Breast epithelium (tissue), 4 donors: ENCODE measurements at regions of chr10 and their contacts with region 1.

Region 1: DNA sequence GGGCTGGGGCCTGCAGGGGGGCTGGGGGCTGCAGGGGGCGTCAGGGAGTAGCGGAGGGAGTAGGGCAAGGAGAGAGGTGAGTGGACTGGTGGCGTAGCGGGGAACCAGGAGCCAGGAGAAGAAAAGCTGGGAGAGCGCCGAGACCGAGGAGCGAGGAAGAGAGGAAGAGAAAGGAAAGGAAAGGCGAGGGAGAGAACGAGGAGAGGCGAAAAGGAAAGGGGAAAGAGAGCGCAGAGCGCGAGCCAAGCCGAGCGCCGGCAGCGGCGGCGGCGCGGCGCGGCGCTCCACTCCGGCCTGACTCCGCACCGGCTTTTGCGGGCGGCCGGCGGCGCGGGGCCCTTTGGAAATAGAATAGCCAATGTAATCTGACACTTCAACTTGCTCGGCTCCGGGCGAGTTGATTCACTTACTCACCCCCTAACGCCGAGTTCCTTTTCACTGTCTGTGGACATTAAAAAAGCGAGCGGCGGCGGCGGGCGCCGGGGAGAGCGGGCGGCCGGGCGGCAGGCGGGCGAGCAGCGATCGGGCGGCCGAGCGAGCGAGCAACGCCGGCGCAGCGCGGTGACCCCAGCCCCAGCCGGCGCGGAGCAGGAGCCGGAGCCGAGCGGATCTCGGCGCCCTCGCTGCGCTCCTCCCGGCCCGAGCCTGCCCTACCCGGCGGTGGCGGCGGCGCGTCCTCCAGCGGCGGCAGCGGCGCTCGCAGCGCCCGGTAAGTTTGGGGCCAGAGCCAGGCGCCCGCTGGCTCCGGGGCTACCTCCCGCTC is at the start of gene ZMIZ1:
- DNase-seq: peak; percentile 89
- H3K4me3 ChIP-seq: peak within 1 kb of the TSS; percentile 65 to 98 (median 78)
- H3K27ac ChIP-seq: peak within 1 kb of the TSS; percentile 98 to 99
- H3K4me1 ChIP-seq: peaks cover 11 to 20% of the 10 kb centered on the region in 2 donors
- H3K27me3 ChIP-seq: no peaks in the 10 kb centered on the region
- CTCF ChIP-seq: peak in 1 of 3 donors; percentile 21
- POLR2A ChIP-seq: no peak
- total RNA-seq, gene ZMIZ1: 34.4 to 63.7 (median 39.8) TPM

Region 2: DNA sequence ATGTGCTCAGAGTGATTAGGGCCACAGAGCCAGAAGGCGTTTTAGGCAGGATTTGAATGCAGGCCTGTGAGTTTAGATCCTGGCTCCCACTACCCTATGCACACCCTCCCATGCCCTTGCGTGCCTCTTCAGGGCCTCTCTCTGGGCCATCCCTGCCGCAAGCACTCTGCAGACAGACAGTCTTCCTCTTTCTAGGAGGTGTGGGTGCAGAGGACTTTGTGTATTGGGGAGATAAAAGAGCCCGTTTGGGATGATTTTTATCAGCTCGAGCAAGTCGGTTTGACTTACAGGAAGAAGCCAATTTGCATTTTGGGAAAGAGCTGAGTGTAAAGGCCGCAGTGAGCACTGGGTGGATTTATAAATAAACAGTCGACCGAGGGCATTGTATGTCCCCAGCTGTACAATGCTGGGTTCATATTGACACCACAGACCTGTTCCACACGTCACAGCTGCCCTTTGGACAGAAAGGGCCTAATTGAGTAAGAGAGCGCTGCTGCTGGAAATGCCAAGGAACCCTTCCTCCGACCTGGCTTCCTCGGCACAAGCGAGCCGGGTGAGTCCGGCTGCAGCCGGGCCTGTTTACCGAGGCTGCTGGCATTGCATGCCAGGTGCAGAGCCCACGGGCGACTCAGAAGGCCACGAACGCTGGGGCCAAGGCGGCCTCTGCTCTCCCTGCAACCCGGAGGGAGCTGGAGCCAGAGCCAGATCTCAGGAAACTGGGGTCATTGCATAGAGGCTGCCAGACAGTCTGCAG is 25.1 kb after region 1 on chr10:
- intact Hi-C with region 1: no loop called
- DNase-seq: peak; percentile 84 to 89
- H3K4me3 ChIP-seq: peak overlapping the region in 1 of 3 donors; percentile 10
- H3K27ac ChIP-seq: peak overlapping the region; percentile 93 to 98
- H3K4me1 ChIP-seq: peaks cover 11 to 35% of the 10 kb centered on the region in 2 donors
- H3K27me3 ChIP-seq: no peaks in the 10 kb centered on the region
- CTCF ChIP-seq: no peak
- POLR2A ChIP-seq: no peak

Region 3: DNA sequence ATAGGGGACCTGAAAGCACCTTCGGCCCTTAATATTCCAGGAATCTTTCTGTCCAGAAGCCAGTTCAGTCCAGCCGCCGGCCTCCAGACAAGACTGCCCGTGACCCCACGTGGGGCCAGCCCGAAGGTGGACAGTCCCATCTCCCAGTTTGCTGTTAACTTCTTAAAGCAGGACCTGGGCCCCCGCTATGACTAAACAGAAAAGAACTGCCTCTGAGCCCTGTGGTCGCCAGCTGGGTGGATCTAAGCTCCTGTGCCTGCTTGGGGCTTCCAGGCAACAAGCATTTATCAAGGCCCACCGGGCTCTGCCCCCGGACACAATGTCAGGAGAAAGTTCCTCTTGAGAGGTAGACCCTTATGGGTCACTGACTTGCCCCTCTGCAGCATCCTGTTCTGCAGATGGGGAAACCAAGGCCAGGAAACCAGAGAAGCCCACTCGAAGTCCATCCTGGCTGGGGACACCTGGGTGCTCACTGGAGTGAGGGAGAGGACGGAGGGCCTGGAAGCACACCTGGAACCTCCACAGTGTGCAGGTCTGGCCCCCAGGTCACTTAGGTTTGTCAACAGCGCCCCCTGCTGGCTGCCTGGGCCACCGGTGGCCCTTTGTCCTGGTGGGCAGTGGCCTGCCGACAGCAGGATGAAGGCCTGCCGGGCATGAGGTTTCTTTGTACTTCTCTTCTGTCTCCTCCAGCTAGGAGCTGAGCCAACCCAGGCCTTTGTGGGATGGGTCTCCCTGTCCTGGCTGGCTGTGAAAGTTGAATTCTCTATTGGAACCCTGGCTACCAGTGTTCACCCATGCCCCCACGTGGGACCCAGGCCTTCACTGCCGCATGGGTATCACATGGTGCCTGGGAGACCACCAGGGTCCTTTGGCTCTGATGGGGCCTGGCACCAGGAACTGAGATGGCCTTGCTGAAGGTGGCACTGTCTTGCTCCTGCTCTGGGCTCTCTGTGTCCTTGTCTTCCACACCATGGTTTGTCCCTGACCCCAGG is 128.0 kb after region 1 on chr10:
- intact Hi-C with region 1: loop called (anchors 1 kb)
- DNase-seq: peak; percentile 52 to 81
- H3K4me3 ChIP-seq: no peak overlapping the region
- H3K27ac ChIP-seq: no peak overlapping the region
- H3K4me1 ChIP-seq: peaks cover 7 to 10% of the 10 kb centered on the region in 2 donors
- H3K27me3 ChIP-seq: no peaks in the 10 kb centered on the region
- CTCF ChIP-seq: peak; percentile 63 to 89 (median 87)
- POLR2A ChIP-seq: no peak